ENCODE measurements at regions of chr9 and their contacts with region 1.

Region 1: GRCh38 chr9:21750021-21750735 is 52.3 kb upstream of the MTAP start:
- DNase-seq: no peak
- H3K4me3 Mint-ChIP-seq: no peak overlapping the region
- H3K27ac Mint-ChIP-seq: no peak overlapping the region
- H3K4me1 Mint-ChIP-seq: no peaks in the 10 kb centered on the region
- H3K27me3 Mint-ChIP-seq: peaks cover 5% of the 10 kb centered on the region

Region 2: DNA sequence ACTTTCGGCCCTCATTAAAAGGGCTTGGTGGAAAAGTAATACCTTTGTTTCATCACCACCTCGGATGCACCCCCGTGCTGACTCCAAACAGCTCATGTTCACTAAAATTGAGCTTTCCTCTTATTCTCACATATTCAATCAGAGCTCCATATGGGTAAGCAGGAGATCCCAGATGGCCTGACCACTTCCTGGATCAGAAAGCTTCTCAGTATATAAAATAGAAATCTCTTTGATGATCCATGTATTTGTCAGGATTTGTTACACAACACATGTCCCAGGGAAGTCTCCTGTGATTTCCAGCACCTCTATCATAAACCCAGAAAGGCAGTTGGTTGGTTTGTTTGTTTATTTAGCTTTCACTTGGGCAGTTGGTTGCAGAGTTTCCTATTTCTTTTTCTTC is 1529.9 kb before region 1 on chr9:
- CTCF ChIA-PET with region 1: no interaction called
- intact Hi-C with region 1: loop called (anchors 5 kb)
- DNase-seq: no peak
- H3K4me3 Mint-ChIP-seq: no peak overlapping the region
- H3K27ac Mint-ChIP-seq: no peak overlapping the region
- H3K4me1 Mint-ChIP-seq: peaks cover 18% of the 10 kb centered on the region
- H3K27me3 Mint-ChIP-seq: no peaks in the 10 kb centered on the region

Region 3: DNA sequence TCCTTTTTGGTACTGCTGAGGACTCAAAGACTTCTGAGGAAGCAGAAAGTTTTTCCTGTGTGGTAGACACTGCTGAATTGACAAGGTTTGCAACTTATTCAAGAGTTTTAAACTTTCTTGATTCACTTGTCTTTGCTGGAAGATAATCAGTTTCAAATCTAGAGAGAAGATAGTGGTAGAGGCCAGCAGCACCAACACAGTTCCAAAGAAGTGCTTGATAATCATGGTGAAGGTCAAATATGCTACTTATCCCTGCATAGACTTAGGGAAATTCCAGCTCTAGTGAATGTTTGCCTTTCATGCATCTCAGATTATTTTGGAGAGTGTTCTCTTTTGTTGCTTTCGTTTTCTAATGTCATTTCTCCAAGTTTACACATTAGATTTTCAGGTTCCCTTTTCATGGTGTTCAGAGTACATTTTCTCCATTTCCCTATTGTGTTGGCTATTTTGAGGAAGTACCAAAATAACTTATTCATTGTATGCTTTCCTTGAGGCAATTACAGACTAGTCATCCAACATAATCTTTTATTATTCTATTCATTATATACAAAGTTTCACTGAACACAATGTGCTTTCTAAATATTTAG is 268.6 kb before region 1 on chr9:
- CTCF ChIA-PET with region 1: no interaction called
- intact Hi-C with region 1: no loop called
- DNase-seq: no peak
- H3K4me3 Mint-ChIP-seq: no peak overlapping the region
- H3K27ac Mint-ChIP-seq: no peak overlapping the region
- H3K4me1 Mint-ChIP-seq: peaks cover 4% of the 10 kb centered on the region
- H3K27me3 Mint-ChIP-seq: no peaks in the 10 kb centered on the region

Measured in activated naive CD4-positive, alpha-beta T cell treated with anti-CD3 and anti-CD28 coated beads for 36 hours (primary cell).